OCI-LY7 (cell line): ENCODE measurements at regions of chr11 and their contacts with region 1.

Region 1: DNA sequence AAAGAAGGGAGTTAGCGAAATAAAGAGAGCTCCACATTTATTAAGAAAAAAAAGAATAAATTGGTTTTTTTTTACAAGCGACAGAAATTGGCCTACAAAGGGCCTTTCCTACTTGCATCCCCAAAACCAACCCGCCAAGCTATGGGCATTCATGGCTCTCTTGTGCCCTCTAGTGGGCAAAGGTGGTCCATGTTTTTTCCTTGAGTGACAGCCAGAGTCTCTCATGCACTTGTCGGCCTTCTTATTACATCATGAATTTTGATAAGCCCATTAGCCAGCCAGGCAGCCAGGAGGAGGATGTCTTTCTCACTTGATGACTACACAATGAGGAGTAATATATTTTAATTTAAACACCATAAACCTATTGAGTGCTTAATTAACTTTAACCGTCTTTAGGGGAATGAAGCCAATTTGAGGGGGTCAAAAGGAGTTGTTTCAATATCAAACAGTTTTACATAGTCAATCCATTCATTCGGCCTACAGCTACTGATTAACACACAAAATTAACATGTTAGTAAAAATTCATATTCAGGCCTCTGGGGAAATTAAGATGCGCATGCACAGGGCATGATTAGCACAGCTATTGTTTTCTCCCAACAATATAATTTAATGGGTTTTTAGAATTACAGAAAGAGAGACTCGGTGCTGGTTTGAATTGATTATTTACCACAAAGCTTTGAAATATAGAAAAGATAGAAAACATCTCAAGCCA is 85.5 kb downstream of the RCN1 start:
- DNase-seq: peak; percentile 73
- H3K4me3 ChIP-seq: no peak overlapping the region
- H3K27ac ChIP-seq: no peak overlapping the region
- H3K4me1 ChIP-seq: no peaks in the 10 kb centered on the region
- CTCF ChIP-seq: peak; percentile 92

Region 2: DNA sequence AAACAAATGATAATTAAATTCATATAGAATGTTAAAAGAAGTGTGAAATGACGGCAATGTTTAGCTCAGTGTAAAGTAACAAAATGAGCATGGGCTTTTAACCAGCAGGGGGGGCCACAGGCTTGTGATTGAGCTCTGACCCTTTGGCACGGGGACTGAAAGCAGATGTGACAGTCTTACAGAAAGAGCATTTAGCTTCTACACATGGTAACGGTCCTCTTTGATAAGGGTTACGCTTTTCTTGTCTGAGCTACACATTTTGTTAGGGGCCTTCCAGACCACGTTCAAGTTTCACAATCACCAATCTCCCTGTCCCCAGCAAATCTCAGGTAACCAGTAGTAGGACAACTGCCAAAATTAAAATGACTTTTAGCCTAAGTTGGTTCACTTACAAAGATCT is 1069.3 kb before region 1 on chr11:
- CTCF ChIA-PET with region 1: no interaction called
- POLR2A ChIA-PET with region 1: no interaction called
- intact Hi-C with region 1: loop called (anchors 10 kb)
- DNase-seq: peak; percentile 37
- H3K4me3 ChIP-seq: no peak overlapping the region
- H3K27ac ChIP-seq: no peak overlapping the region
- H3K4me1 ChIP-seq: no peaks in the 10 kb centered on the region
- CTCF ChIP-seq: peak; percentile 80

Region 3: GRCh38 chr11:32052218-32052617 is 124.2 kb before region 1 on chr11:
- CTCF ChIA-PET with region 1: no interaction called
- POLR2A ChIA-PET with region 1: no interaction called
- intact Hi-C with region 1: loop called (anchors 1 kb)
- DNase-seq: peak; percentile 42
- H3K4me3 ChIP-seq: no peak overlapping the region
- H3K27ac ChIP-seq: no peak overlapping the region
- H3K4me1 ChIP-seq: no peaks in the 10 kb centered on the region
- CTCF ChIP-seq: peak; percentile 85

Region 4: DNA sequence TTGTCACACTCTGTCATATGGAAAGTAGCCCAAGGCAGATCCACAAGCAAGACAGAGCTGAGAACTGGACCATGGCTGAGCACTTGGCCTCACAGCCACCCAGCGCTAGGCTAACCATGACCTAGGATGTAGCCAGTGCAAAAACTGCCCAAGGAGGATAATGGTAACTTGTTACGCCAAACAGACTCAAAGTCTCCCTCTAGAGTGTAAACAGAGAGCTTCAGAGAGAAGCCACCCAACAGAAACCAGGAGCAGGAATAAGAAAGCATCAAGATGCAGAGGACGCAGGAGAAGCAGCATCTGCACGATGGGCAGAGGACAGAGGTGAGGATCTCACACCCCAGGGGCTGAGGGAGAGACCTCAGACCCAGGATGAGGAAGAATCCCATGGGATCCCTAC is 12.4 kb after region 1 on chr11:
- CTCF ChIA-PET with region 1: no interaction called
- POLR2A ChIA-PET with region 1: no interaction called
- intact Hi-C with region 1: no loop called
- DNase-seq: no peak
- H3K4me3 ChIP-seq: no peak overlapping the region
- H3K27ac ChIP-seq: no peak overlapping the region
- H3K4me1 ChIP-seq: no peaks in the 10 kb centered on the region
- CTCF ChIP-seq: no peak